ENCODE measurements at regions of chr3 and their contacts with region 1.

Region 1: DNA sequence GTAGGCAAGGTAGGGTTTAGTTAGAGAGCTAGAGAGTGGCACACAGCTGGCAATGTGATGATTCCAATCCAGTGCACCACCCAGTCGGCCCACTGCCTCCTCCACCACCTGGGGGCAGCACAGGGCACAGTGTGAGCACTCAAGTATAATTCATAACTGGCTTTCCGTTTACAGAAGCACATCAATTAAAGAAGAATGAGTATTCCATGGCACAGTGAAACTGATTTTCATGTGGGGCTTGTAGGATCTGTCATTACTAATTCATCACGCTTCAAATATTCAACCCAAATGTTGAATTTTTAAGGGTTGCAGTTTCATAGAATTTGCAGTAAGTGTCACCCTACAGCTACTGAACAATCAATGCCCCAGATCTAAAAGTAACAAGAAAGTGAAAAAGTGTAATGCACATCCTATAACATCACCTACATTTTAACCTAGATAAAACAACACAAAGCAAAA is 149.9 kb downstream of the IGSF11 start:
- DNase-seq: peak; percentile 85 to 93 (median 88)
- ATAC-seq: peak; percentile 84
- H3K4me3 ChIP-seq: no peak overlapping the region
- H3K27ac ChIP-seq: no peak overlapping the region
- H3K4me1 ChIP-seq: no peaks in the 10 kb centered on the region
- H3K27me3 ChIP-seq: no peaks in the 10 kb centered on the region
- CTCF ChIP-seq: peak; percentile 87 to 98 (median 95)
- POLR2A ChIP-seq: no peak

Region 2: DNA sequence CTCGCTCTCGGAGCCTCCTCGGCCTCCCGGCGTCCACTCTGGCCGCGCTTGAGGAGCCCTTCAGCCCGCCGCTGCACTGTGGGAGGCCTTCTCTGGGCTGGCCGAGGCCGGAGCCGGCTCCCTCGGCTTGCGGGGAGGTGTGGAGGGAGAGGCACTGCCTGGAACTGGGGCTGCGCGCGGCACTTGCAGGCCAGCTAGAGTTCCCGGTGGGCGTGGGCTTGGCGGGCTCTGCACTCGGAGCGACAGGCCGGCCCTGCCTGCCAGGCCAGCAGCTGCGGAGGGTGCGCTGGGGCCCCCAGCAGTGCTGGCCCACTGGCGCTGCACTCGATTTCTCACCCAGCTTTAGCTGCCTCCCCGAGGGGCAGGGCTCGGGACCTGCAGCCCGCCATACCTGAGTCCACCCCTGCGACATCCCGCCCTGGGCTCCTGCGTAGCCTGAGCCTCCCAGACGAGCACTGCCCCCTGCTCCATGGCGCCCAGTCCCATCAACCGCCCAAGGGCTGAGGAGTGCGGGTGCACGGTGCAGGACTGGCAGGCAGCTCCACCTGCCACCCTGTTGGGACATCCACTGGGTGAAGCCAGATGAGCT is 615.1 kb before region 1 on chr3:
- intact Hi-C with region 1: no loop called
- DNase-seq: no peak
- ATAC-seq: no peak
- H3K4me3 ChIP-seq: no peak overlapping the region
- H3K27ac ChIP-seq: no peak overlapping the region
- H3K4me1 ChIP-seq: no peaks in the 10 kb centered on the region
- H3K27me3 ChIP-seq: no peaks in the 10 kb centered on the region
- CTCF ChIP-seq: no peak
- POLR2A ChIP-seq: no peak

Region 3: GRCh38 chr3:119034256-119035013 is 149.7 kb after region 1 on chr3 and contains the start of gene IGSF11:
- intact Hi-C with region 1: loop called (anchors 5 kb)
- DNase-seq: peak; percentile 78 to 84 (median 80)
- ATAC-seq: peak; percentile 90
- H3K4me3 ChIP-seq: peak within 1 kb of the TSS; percentile 56 to 81
- H3K27ac ChIP-seq: peak within 1 kb of the TSS; percentile 41 to 88 (median 80)
- H3K4me1 ChIP-seq: peaks cover 6% of the 10 kb centered on the region
- H3K27me3 ChIP-seq: no peaks in the 10 kb centered on the region
- CTCF ChIP-seq: peak; percentile 22 to 93 (median 64)
- POLR2A ChIP-seq: peak; percentile 48 to 78 (median 78)
- total RNA-seq, gene IGSF11: 3.0 to 9.1 TPM

Region 4: GRCh38 chr3:119099785-119100184 is 215.0 kb after region 1 on chr3:
- intact Hi-C with region 1: loop called (anchors 2 kb)
- DNase-seq: no peak
- ATAC-seq: no peak
- H3K4me3 ChIP-seq: no peak overlapping the region
- H3K27ac ChIP-seq: no peak overlapping the region
- H3K4me1 ChIP-seq: no peaks in the 10 kb centered on the region
- H3K27me3 ChIP-seq: no peaks in the 10 kb centered on the region
- CTCF ChIP-seq: no peak
- POLR2A ChIP-seq: no peak

Region 5: DNA sequence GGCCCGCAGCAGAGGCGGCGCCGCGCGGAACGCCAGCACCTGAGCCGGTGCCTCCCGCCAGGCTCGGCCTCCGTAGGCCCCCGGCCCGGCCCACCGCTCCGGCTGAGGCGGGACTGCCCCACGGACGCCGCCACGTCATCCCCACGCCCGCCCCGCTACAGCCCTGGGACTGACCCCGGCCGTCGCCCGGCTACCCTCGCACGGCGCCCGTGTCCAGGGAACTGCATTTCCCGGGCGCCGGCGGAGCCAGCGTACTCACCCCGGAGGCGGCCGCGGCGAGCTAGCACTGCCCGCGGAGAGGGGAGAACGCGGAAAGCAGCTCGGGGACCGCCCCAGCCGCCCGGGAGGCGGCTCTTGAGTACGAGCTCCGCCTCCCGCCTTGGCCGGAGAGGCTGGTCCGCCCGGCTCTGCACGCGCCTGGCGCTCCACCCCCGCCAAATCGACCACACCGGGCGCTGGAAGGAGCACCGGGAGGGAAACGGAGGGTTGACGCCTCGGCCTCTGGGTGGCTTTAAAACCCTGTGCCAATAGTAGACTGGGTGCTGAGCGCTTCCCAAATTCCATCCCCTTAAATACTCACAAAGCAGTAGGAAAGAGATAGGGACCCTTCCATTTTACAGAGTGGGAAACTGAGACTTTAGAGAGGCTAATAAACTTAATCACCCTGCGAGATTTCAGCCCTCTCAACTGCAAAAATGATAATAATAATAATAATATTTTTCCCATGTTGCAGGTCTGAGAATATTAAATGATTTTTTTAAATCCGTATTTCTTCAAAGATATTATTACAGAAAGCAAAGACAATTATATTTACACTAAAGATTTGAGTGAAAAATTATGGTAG is 356.0 kb after region 1 on chr3 and contains the start of gene B4GALT4:
- intact Hi-C with region 1: loop called (anchors 10 kb)
- DNase-seq: peak; percentile 89 to 93 (median 92)
- ATAC-seq: peak; percentile 95
- H3K4me3 ChIP-seq: peak within 1 kb of the TSS; percentile 53 to 86
- H3K27ac ChIP-seq: peak within 1 kb of the TSS; percentile 91 to 99 (median 96)
- H3K4me1 ChIP-seq: peaks cover 23% of the 10 kb centered on the region
- H3K27me3 ChIP-seq: no peaks in the 10 kb centered on the region
- CTCF ChIP-seq: peak in 1 of 7 experiments; percentile 23
- POLR2A ChIP-seq: peak; percentile 94 to 96 (median 95)
- total RNA-seq, gene B4GALT4: 12.5 to 14.8 TPM

Measured in body of pancreas (tissue), 4 donors.